ENCODE measurements at regions of chr22 and their contacts with region 1.

Region 1: DNA sequence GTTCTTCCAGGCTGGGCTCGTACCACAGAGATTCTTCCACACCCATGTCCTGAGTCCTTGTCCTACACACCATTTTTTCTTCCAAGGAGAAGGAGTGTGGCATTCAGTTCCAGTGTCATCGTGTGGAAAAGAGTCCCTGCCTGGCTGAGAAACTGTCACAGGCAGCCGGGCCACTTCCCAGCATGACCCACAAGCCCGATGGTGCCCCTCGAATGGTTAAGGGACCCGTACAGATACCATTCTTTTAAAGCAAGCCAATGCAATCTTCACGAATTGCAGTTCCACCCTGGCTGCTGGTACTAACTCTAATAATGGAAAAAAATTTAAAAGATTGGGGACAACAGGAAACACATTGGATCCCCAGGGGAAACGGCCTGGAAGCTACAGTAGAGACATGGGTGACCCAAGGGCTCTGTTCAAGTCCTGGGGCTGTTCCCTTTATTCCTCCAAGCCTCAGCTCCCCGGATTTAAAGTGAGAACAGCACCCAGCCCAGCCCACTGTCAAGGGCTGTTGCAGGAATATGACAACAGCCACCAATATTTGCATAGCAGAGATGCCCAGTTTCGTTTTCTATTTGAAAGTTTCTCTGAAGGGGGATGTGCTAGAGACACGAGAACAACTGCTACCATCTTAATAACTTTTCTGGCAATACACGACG is 80.9 kb upstream of the WNT7B start:
- DNase-seq: no peak
- H3K4me3 Mint-ChIP-seq: no peak overlapping the region
- H3K27ac Mint-ChIP-seq: no peak overlapping the region
- H3K4me1 Mint-ChIP-seq: peaks cover 16% of the 10 kb centered on the region
- H3K27me3 Mint-ChIP-seq: no peaks in the 10 kb centered on the region
- CTCF ChIP-seq: no peak

Region 2: GRCh38 chr22:46108564-46109473 is 50.9 kb after region 1 on chr22:
- CTCF ChIA-PET with region 1: no interaction called
- intact Hi-C with region 1: loop called (anchors 10 kb)
- DNase-seq: peak; percentile 44
- H3K4me3 Mint-ChIP-seq: no peak overlapping the region
- H3K27ac Mint-ChIP-seq: peak overlapping the region; percentile 84
- H3K4me1 Mint-ChIP-seq: peaks cover 32% of the 10 kb centered on the region
- H3K27me3 Mint-ChIP-seq: no peaks in the 10 kb centered on the region
- CTCF ChIP-seq: peak; percentile 16

Region 3: DNA sequence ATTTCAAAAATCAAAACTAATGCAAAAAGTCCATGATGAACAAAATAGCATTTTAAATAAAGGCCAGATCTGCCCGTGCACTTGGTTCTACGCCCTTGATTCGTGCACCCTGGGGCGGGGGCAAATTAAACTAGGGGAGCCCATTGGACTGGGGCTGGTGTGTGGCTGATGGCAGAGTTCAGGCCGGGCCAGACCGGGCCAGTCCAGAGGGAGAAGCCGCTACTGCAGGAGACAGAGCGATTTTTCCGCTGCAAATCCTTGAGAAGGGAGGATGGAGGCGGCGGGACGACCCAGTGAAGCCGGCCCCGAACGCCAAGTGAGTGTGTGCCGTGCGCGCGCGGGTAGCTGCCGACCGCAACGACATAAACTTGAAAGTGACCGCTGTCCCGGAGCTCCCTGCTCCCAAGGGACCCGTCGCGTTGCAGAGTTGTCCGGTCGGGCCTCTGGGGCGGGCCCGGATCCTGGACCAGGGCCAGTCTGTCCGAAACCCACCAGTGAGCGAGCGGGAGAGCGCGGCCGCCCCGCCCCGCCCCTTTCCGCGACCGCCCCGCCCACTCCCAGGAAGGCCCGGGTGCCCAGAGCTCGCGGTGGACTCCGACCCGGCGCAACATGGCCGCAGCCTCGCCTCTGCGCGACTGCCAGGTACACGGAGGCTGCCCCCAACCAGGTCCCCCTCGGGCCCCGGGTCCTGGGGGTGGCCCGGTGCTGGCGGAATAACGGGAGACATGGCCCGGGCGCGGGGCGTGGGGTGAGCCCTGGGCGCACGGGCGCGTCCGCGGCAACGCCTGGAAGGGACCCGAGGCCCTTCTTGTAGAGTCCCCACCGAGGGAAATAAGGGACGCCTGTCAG is 209.8 kb after region 1 on chr22 and contains the start of gene TTC38:
- CTCF ChIA-PET with region 1: no interaction called
- intact Hi-C with region 1: no loop called
- DNase-seq: peak; percentile 90
- H3K4me3 Mint-ChIP-seq: peak within 1 kb of the TSS; percentile 93
- H3K27ac Mint-ChIP-seq: peak within 1 kb of the TSS; percentile 63
- H3K4me1 Mint-ChIP-seq: peaks cover 23% of the 10 kb centered on the region
- H3K27me3 Mint-ChIP-seq: no peaks in the 10 kb centered on the region
- CTCF ChIP-seq: no peak
- total RNA-seq, gene TTC38: 31.9 and 34.0 TPM in 2 replicates